CD4-positive, alpha-beta T cell (primary cell): ENCODE measurements at regions of chr12 and their contacts with region 1.

Region 1: GRCh38 chr12:46523863-46524770 is 151.5 kb upstream of the SLC38A2 start:
- DNase-seq: peak in 12 of 14 experiments; percentile 14 to 84 (median 34)
- ATAC-seq: peak; percentile 96
- H3K4me3 ChIP-seq: peak overlapping the region; percentile 32
- H3K4me3 Mint-ChIP-seq: peak overlapping the region; percentile 77
- H3K27ac ChIP-seq: peak overlapping the region; percentile 37 to 76
- H3K27ac Mint-ChIP-seq: peak overlapping the region; percentile 83
- H3K4me1 ChIP-seq: peaks cover 21% of the 10 kb centered on the region
- H3K4me1 Mint-ChIP-seq: peaks cover 28% of the 10 kb centered on the region
- H3K27me3 ChIP-seq: no peaks in the 10 kb centered on the region
- H3K27me3 Mint-ChIP-seq: no peaks in the 10 kb centered on the region
- CTCF ChIP-seq: no peak

Region 2: DNA sequence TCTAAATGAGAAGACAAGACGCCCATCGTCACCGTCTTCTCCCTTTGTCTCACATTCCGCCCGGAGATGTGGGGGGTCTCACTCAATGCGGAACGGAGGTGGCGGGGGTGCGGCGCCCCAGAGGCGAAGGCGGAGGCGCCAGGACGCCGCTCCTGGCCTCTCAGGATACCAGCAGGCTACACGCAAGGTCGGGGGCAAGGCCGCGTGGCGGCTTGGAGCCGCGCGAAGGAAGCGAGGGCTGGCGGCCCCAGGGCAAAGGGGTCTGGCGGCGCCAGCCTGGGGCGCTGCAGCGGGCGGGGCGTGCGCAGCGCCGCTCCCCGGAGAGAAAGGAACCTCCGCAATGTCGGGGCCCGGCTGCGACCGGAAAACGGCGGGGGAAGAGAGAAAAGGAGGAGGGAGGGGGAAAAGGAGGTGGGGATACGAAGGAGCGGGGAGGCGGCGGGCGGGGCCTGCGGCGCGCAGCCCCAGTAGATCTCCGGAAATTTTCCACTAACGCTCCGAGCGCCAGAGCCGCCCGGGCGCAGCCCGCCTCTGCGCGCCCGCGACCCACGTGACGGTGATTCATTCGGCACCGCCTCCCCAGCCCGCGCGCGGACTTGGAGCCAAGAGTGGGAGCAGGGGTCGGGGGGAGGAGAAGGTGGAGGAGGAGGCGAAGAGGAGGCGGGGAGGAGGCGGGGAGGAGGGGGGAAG is 141.0 kb before region 1 on chr12:
- CTCF ChIA-PET with region 1: no interaction called
- POLR2A ChIA-PET with region 1: interaction called, 15 read pairs
- intact Hi-C with region 1: no loop called
- DNase-seq: peak; percentile 74 to 97 (median 88)
- ATAC-seq: peak; percentile 73
- H3K4me3 ChIP-seq: peak overlapping the region; percentile 83
- H3K4me3 Mint-ChIP-seq: peak overlapping the region; percentile 93
- H3K27ac ChIP-seq: peak overlapping the region; percentile 83 to 90
- H3K27ac Mint-ChIP-seq: peak overlapping the region; percentile 99
- H3K4me1 ChIP-seq: peaks cover 16% of the 10 kb centered on the region
- H3K4me1 Mint-ChIP-seq: peaks cover 44% of the 10 kb centered on the region
- H3K27me3 ChIP-seq: no peaks in the 10 kb centered on the region
- H3K27me3 Mint-ChIP-seq: no peaks in the 10 kb centered on the region
- CTCF ChIP-seq: peak; percentile 4

Region 3: GRCh38 chr12:46585854-46586621 is 61.9 kb after region 1 on chr12:
- CTCF ChIA-PET with region 1: no interaction called
- POLR2A ChIA-PET with region 1: interaction called, 11 read pairs
- intact Hi-C with region 1: no loop called
- DNase-seq: peak; percentile 15 to 83 (median 51)
- ATAC-seq: peak; percentile 61
- H3K4me3 ChIP-seq: no peak overlapping the region
- H3K4me3 Mint-ChIP-seq: peak overlapping the region; percentile 71
- H3K27ac ChIP-seq: peak overlapping the region in 1 of 2 donors; percentile 13
- H3K27ac Mint-ChIP-seq: peak overlapping the region; percentile 87
- H3K4me1 ChIP-seq: peaks cover 14% of the 10 kb centered on the region
- H3K4me1 Mint-ChIP-seq: peaks cover 80% of the 10 kb centered on the region
- H3K27me3 ChIP-seq: no peaks in the 10 kb centered on the region
- H3K27me3 Mint-ChIP-seq: no peaks in the 10 kb centered on the region
- CTCF ChIP-seq: no peak